ENCODE measurements at regions of chr5 and their contacts with region 1.

Region 1: GRCh38 chr5:6765612-6766525 is 52.6 kb downstream of the TENT4A start:
- DNase-seq: peak; percentile 78 to 83 (median 83)
- H3K4me3 ChIP-seq: peak overlapping the region in 3 of 7 experiments; percentile 35 to 46 (median 43)
- H3K27ac ChIP-seq: no peak overlapping the region
- H3K4me1 ChIP-seq: peaks cover 6 to 21% (median 18%) of the 10 kb centered on the region in 4 experiments
- H3K27me3 ChIP-seq: no peaks in the 10 kb centered on the region

Region 2: GRCh38 chr5:6556089-6556801 is 209.6 kb before region 1 on chr5:
- CTCF ChIA-PET with region 1: no interaction called
- POLR2A ChIA-PET with region 1: no interaction called
- DNase-seq: no peak
- H3K4me3 ChIP-seq: no peak overlapping the region
- H3K27ac ChIP-seq: no peak overlapping the region
- H3K4me1 ChIP-seq: no peaks in the 10 kb centered on the region
- H3K27me3 ChIP-seq: no peaks in the 10 kb centered on the region

Region 3: GRCh38 chr5:6636293-6636692 is 129.6 kb before region 1 on chr5:
- CTCF ChIA-PET with region 1: no interaction called
- POLR2A ChIA-PET with region 1: no interaction called
- DNase-seq: no peak
- H3K4me3 ChIP-seq: no peak overlapping the region
- H3K27ac ChIP-seq: no peak overlapping the region
- H3K4me1 ChIP-seq: peaks cover 3 to 23% (median 18%) of the 10 kb centered on the region in 4 experiments
- H3K27me3 ChIP-seq: no peaks in the 10 kb centered on the region

Region 4: GRCh38 chr5:6780802-6781391 is 15.0 kb after region 1 on chr5:
- CTCF ChIA-PET with region 1: interaction called, 15 read pairs
- POLR2A ChIA-PET with region 1: interaction called, 3 read pairs
- DNase-seq: peak in 2 of 3 donors; percentile 51
- H3K4me3 ChIP-seq: no peak overlapping the region
- H3K27ac ChIP-seq: no peak overlapping the region
- H3K4me1 ChIP-seq: peaks cover 0 to 10% (median 6%) of the 10 kb centered on the region in 4 experiments
- H3K27me3 ChIP-seq: no peaks in the 10 kb centered on the region

Region 5: DNA sequence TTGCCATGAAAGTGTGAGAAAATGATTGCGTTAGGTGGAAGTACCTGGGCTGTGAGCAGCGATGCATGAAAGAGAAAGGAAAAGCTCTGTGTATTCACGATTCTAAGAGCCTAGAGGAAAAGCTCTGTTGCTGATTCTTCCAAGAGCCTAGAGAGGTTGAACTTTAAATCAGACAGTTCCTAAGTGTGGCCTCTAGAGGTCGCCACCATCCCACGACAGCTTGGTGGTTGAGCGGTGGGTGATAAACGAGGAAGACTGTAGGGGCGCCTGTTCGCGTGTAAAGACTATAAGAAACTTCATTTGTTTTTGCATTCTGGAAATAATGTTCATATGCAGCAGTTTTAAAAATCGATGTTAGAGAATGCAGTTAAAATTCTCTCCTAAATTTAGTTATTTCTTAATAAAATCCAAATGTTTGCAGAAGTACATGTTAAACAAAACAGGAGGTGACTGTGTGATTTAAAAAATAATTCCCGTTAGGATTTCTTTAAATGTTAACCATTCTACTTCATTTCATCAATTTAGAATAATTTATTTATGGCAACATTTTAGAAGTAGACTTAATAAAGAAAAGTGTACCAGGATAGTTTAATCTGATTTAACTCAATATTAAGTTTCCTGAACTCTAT is 55.1 kb after region 1 on chr5:
- CTCF ChIA-PET with region 1: interaction called, 28 read pairs
- POLR2A ChIA-PET with region 1: no interaction called
- DNase-seq: peak; percentile 79 to 88 (median 87)
- H3K4me3 ChIP-seq: no peak overlapping the region
- H3K27ac ChIP-seq: no peak overlapping the region
- H3K4me1 ChIP-seq: peaks cover 0 to 1% (median 0%) of the 10 kb centered on the region in 4 experiments
- H3K27me3 ChIP-seq: peaks cover 0 to 6% (median 0%) of the 10 kb centered on the region in 5 experiments

Region 6: GRCh38 chr5:6900247-6901227 is 134.7 kb after region 1 on chr5:
- CTCF ChIA-PET with region 1: no interaction called
- POLR2A ChIA-PET with region 1: no interaction called
- DNase-seq: no peak
- H3K4me3 ChIP-seq: no peak overlapping the region
- H3K27ac ChIP-seq: no peak overlapping the region
- H3K4me1 ChIP-seq: no peaks in the 10 kb centered on the region
- H3K27me3 ChIP-seq: peaks cover 0 to 2% (median 0%) of the 10 kb centered on the region in 5 experiments

Measured in common myeloid progenitor, CD34-positive (primary cell).